ENCODE measurements at regions of chr10 and their contacts with region 1.

Region 1: DNA sequence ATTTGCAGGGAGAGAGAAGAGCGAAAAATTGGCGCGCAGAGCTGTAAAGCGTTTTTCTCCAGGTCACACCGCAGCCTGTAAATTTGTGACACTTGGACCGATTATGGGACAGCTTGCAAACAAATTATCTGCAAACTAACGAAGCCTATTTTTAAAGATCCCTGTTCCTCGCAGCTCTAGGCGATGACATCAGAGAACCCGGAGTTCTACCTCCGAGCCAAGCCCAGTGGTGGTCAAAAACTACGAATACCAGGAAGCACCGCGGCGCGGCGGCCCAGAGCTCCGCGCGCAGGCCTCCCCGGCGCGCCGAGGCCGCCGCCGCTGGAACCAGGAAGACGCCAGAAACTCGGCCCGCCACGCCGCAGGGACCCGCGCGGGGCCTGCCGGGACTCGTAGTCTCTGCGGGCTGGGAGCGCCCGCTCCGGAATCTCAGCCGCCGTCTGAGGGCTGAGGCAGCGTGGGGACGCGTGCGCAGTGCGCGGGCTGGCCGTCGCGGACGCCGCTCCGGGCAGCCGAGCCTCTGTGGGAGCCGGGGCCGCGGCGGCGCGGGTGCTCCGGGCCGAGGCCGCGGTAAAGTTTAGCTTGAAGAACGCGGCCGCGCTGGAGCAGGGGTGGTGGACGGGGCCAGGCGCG is at the start of gene PLEKHA1:
- DNase-seq: peak; percentile 96 to 98 (median 97)
- ATAC-seq: peak; percentile 87 to 97 (median 94)
- H3K4me3 ChIP-seq: peak within 1 kb of the TSS; percentile 68 to 95 (median 90)
- H3K27ac ChIP-seq: peak within 1 kb of the TSS; percentile 94 to 99 (median 98)
- H3K4me1 ChIP-seq: peaks cover 0 to 67% (median 40%) of the 10 kb centered on the region in 12 donors
- H3K27me3 ChIP-seq: peaks cover 0 to 6% (median 0%) of the 10 kb centered on the region in 9 donors
- CTCF ChIP-seq: peak in 3 of 12 donors; percentile 8 to 40 (median 23)
- POLR2A ChIP-seq: peak in 1 of 2 donors; percentile 97
- total RNA-seq, gene PLEKHA1: 32.3 to 70.6 (median 44.7) TPM

Region 2: GRCh38 chr10:121324678-121325213 is 1049.6 kb before region 1 on chr10:
- intact Hi-C with region 1: no loop called
- DNase-seq: no peak
- ATAC-seq: no peak
- H3K4me3 ChIP-seq: no peak overlapping the region
- H3K27ac ChIP-seq: no peak overlapping the region
- H3K4me1 ChIP-seq: no peaks in the 10 kb centered on the region
- H3K27me3 ChIP-seq: peaks cover 0 to 17% (median 0%) of the 10 kb centered on the region in 9 donors
- CTCF ChIP-seq: no peak
- POLR2A ChIP-seq: no peak

Region 3: DNA sequence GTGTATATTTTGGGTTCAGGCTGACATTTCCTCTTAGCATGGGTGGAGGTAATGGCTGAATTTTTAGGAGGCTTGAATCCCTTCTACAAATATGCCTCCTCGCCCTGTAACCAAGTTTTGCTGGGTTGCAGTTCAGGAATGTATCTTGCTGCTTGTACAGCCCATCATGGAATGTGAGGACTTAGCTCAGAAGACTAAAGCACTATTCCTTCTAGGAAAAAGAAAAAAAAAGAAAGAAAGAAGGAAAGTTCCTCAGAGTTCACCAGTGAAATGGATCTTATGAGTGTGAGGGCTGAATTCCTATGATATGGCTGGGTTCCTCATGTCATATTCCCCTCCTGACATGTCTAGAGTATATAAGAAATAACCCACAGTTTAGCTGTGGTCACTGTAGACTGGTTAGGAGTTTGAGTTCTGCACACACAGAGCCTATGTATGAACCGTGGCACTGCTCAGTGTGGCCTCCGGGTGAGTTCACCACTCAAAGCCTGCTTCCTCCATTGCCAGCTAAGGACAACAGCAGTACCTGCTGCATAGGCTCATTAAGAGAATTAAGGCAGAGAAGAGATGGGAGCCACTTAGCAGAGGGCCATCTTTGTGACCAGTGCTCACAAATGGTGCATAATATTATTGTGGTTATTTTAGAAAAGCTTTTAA is 271.4 kb before region 1 on chr10:
- intact Hi-C with region 1: no loop called
- DNase-seq: no peak
- ATAC-seq: peak in 2 of 4 donors; percentile 4 to 14
- H3K4me3 ChIP-seq: no peak overlapping the region
- H3K27ac ChIP-seq: peak overlapping the region in 4 of 12 donors; percentile 3 to 63 (median 44)
- H3K4me1 ChIP-seq: peaks cover 0 to 35% (median 20%) of the 10 kb centered on the region in 12 donors
- H3K27me3 ChIP-seq: no peaks in the 10 kb centered on the region
- CTCF ChIP-seq: no peak
- POLR2A ChIP-seq: no peak

Region 4: GRCh38 chr10:122307669-122308486 is 66.5 kb before region 1 on chr10:
- intact Hi-C with region 1: loop called in 1 of 10 experiments (anchors 1 kb)
- DNase-seq: peak; percentile 77 to 88 (median 78)
- ATAC-seq: peak; percentile 89 to 93 (median 91)
- H3K4me3 ChIP-seq: peak overlapping the region in 8 of 12 donors; percentile 2 to 30 (median 14)
- H3K27ac ChIP-seq: peak overlapping the region; percentile 71 to 91 (median 82)
- H3K4me1 ChIP-seq: peaks cover 0 to 37% (median 21%) of the 10 kb centered on the region in 12 donors
- H3K27me3 ChIP-seq: no peaks in the 10 kb centered on the region
- CTCF ChIP-seq: no peak
- POLR2A ChIP-seq: no peak

Region 5: DNA sequence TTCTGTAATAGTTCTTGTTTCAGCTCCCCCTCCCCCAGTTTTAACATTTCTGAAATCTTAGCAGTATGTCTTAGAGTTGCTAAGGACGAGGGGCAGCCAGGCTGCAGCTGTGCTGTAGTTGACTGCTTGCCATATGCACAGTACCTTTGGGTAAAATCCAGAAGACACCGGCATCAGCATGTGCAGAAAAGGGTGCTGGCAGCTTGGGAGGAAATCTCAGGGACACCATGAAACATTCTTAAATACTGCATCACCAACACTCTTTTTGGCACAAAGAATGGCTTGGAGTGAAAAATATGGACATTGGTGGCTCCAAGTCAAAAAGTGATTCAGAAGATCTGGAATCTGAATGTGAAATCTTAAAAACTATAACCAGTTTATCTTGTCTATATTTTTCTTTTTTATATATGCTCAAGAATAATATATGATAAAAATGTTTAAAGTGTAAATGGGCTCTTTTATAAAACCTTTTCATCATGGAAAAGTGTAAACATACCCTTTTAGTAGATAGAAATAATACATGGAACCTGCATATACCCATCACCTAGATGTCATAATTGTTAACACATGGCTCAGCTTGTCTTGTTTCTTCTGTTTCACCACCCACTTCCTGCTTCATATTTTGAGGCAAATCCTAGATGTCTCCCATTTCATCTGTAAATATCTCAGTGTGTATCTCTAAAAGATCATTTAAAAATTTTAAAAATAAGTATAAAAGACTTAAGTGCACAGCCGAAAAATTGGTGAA is 45.7 kb after region 1 on chr10:
- intact Hi-C with region 1: loop called in 1 of 10 experiments (anchors 5 kb)
- DNase-seq: peak in 2 of 5 donors; percentile 26 to 46
- ATAC-seq: peak in 3 of 4 donors; percentile 37 to 65 (median 63)
- H3K4me3 ChIP-seq: no peak overlapping the region
- H3K27ac ChIP-seq: peak overlapping the region in 2 of 12 donors; percentile 32 to 34
- H3K4me1 ChIP-seq: peaks cover 0 to 66% (median 11%) of the 10 kb centered on the region in 12 donors
- H3K27me3 ChIP-seq: no peaks in the 10 kb centered on the region
- CTCF ChIP-seq: no peak
- POLR2A ChIP-seq: no peak

Region 6: GRCh38 chr10:122980209-122981065 is 606.1 kb after region 1 on chr10 and contains the start of gene PSTK:
- intact Hi-C with region 1: loop called in 1 of 10 experiments (anchors 10 kb)
- DNase-seq: peak; percentile 91 to 96 (median 94)
- ATAC-seq: peak; percentile 97 to 99 (median 99)
- H3K4me3 ChIP-seq: peak within 1 kb of the TSS; percentile 41 to 92 (median 74)
- H3K27ac ChIP-seq: peak within 1 kb of the TSS; percentile 86 to 96 (median 92)
- H3K4me1 ChIP-seq: peaks cover 0 to 13% (median 6%) of the 10 kb centered on the region in 12 donors
- H3K27me3 ChIP-seq: no peaks in the 10 kb centered on the region
- CTCF ChIP-seq: peak; percentile 86 to 98 (median 95)
- POLR2A ChIP-seq: peak in 1 of 2 donors; percentile 53
- total RNA-seq, gene PSTK: 0.97 to 3.9 (median 2.0) TPM